PC-3 (cell line): ENCODE measurements at regions of chr7 and their contacts with region 1.

Region 1: GRCh38 chr7:130822642-130823041 is 88.6 kb upstream of the KLF14 start:
- DNase-seq: no peak
- ATAC-seq: no peak
- H3K4me3 ChIP-seq: no peak overlapping the region
- H3K27ac ChIP-seq: no peak overlapping the region
- H3K4me1 ChIP-seq: no peaks in the 10 kb centered on the region
- H3K27me3 ChIP-seq: no peaks in the 10 kb centered on the region
- CTCF ChIP-seq: no peak

Region 2: DNA sequence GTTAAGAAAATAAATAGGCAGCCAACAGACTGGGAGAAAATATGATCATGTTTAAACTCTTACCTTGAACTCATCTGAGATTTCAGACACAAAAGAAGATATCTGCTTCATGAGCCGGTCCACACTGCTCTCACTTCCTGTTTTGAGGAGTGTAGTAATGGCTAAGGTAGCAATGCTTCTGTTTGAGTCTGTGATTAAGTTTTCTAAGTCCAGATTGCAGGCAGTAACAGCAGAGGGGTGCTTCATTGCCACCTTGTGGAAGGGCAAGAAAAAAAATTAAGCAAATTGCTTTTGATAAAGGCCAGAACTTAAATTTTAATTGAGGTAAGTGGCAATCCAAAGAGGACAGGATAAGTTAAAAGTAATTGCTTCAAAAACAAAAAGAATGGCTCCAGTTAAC is 261.7 kb before region 1 on chr7:
- CTCF ChIA-PET with region 1: interaction called, 10 read pairs
- POLR2A ChIA-PET with region 1: no interaction called
- intact Hi-C with region 1: no loop called
- DNase-seq: peak; percentile 49
- ATAC-seq: peak; percentile 49; the same call in 1 of the 2 replicates
- H3K4me3 ChIP-seq: no peak overlapping the region
- H3K27ac ChIP-seq: no peak overlapping the region
- H3K4me1 ChIP-seq: no peaks in the 10 kb centered on the region
- H3K27me3 ChIP-seq: no peaks in the 10 kb centered on the region
- CTCF ChIP-seq: peak; percentile 65